ENCODE measurements at regions of chr1 and their contacts with region 1.

Region 1: DNA sequence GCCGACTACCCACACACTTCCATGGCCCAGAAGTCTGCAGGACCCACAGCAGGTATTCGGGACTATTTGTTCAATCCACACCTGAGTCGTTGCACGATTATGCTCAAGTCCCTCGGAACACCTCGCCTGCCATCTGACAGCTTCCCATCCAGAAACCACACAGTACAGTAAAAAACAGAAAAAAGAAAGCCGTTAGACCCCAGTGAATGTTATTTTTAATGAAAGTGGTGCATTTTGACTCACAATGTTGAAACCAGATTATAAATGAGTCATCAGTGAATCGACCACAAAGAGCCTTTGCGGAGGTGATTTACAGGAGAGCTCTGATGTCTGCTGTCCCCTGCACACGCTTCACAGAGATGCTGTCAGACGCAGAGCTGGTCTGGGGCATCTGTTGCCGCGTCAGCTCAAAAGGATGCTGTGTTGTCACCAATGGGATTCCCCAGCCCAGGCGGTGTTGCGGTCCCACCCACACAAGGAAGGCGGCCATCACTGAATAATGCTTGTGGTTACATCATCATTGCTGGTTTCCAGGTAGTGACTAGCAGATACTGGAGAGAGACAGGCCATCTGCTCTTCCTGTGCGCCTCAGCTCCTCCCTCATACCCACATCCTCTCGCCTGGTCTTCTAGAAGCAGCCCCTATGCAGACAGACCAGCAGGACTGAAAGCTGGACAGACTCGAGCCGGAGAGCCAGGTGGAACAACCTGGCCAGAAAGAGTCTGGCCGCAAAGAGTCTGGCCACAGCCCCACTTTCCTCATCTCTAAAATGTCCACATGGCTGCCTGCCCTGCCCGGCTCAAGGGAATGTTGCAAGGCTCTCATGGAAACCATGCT is 116.8 kb downstream of the TOMM20 start:
- DNase-seq: peak; percentile 97
- H3K4me3 Mint-ChIP-seq: peak overlapping the region; percentile 57
- H3K27ac Mint-ChIP-seq: peak overlapping the region; percentile 100
- H3K4me1 Mint-ChIP-seq: peaks cover 86% of the 10 kb centered on the region
- H3K27me3 Mint-ChIP-seq: no peaks in the 10 kb centered on the region

Region 2: GRCh38 chr1:234610348-234611152 is 401.3 kb before region 1 on chr1:
- intact Hi-C with region 1: loop called (anchors 1 kb)
- DNase-seq: peak; percentile 86
- H3K4me3 Mint-ChIP-seq: peak overlapping the region; percentile 88
- H3K27ac Mint-ChIP-seq: peak overlapping the region; percentile 98
- H3K4me1 Mint-ChIP-seq: peaks cover 39% of the 10 kb centered on the region
- H3K27me3 Mint-ChIP-seq: peaks cover 2% of the 10 kb centered on the region

Region 3: GRCh38 chr1:234842726-234843641 is 168.8 kb before region 1 on chr1:
- intact Hi-C with region 1: loop called (anchors 1 kb)
- DNase-seq: peak; percentile 57
- H3K4me3 Mint-ChIP-seq: peak overlapping the region; percentile 77
- H3K27ac Mint-ChIP-seq: peak overlapping the region; percentile 90
- H3K4me1 Mint-ChIP-seq: peaks cover 93% of the 10 kb centered on the region
- H3K27me3 Mint-ChIP-seq: no peaks in the 10 kb centered on the region

Region 4: GRCh38 chr1:234941321-234942011 is 70.4 kb before region 1 on chr1:
- intact Hi-C with region 1: loop called (anchors 1 kb)
- DNase-seq: no peak
- H3K4me3 Mint-ChIP-seq: no peak overlapping the region
- H3K27ac Mint-ChIP-seq: no peak overlapping the region
- H3K4me1 Mint-ChIP-seq: peaks cover 40% of the 10 kb centered on the region
- H3K27me3 Mint-ChIP-seq: no peaks in the 10 kb centered on the region

Region 5: DNA sequence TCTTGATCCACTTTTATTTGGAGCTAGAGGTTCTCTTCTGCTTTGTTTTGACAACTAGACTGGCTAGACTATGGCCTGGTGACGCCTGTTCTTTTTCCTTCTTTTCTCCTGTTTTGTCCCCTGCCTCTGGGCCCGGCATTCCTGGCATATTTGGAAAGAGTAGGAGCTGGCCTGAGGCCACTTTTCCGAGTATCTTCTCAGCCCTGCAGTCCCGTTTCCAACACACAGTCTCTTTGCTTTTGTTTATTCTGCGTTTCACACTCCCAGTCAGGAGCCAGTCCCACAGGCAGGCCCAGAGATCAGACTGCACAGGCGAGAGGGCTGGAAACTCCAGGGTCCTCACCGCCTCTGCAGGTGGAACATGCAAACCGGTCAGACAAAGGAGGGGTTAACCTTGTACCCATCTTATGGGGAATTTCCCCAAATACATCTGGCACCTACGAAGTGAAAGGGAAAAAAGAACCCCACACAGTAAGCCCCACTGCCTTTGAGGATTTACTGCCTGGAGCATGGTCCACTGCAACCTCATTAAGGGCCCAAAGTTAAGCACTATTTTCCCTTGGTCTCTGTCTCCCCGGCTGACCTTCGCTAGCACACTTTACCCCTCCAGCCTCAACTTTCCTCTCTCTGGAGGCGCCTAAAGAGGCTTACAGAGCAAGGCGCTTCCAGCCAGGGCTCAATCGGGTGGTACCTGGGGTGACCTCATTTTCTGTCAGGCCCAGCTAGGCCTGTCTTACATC is 24.2 kb before region 1 on chr1:
- intact Hi-C with region 1: loop called (anchors 1 kb)
- DNase-seq: no peak
- H3K4me3 Mint-ChIP-seq: peak overlapping the region; percentile 51
- H3K27ac Mint-ChIP-seq: peak overlapping the region; percentile 97
- H3K4me1 Mint-ChIP-seq: peaks cover 72% of the 10 kb centered on the region
- H3K27me3 Mint-ChIP-seq: no peaks in the 10 kb centered on the region

Region 6: GRCh38 chr1:235075188-235075926 is 63.5 kb after region 1 on chr1:
- intact Hi-C with region 1: loop called (anchors 1 kb)
- DNase-seq: no peak
- H3K4me3 Mint-ChIP-seq: peak overlapping the region; percentile 56
- H3K27ac Mint-ChIP-seq: peak overlapping the region; percentile 99
- H3K4me1 Mint-ChIP-seq: peaks cover 34% of the 10 kb centered on the region
- H3K27me3 Mint-ChIP-seq: no peaks in the 10 kb centered on the region